CD14-positive monocyte (primary cell): ENCODE measurements at regions of chr13 and their contacts with region 1.

Region 1: DNA sequence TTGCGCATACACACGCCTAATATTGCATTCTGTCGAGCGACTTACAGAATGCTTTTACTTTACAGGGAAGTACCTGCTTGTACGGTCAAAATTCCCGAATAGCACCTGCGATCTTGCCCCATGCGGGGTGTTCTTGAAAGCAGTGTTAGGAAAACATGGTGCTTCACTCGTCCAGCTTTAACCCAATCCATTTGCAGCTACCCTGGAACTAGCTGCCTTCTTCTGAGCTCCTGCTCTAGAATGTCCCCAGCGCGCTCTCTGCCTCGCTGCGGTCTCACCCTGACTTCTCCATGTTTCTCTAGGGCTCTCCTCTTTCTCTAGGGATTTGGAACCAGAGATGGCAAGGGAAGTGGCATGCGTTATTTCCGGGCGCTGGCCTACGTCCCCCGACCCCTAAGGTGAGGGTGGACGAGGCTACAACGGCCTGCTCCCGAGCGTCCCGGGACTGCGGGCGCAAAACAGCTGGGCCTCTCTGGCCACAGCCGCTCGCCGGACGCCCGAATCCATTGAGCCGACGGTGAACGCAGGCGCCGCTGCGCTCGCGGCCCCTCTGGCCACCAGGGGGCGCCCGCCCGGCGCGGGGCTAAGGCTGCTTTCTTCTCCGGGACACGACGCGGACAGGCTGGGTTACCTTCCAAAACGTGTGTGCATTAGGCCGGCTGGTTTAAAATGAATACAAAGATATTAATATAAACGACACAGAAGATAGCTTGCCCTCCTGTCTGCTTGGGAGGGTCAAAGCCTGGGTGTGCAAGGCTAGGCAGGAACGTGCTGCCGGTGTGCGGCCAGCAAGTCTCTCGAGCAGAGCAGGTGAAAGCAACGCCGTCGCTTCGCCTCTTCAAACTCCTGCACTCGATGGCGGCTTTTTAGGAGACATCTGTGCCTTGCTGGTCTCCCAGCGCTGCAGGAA is 1.8 kb upstream of the SPRY2 start:
- DNase-seq: peak; percentile 57 to 67 (median 64)
- H3K4me3 ChIP-seq: peak overlapping the region; percentile 42 to 89 (median 52)
- H3K4me3 Mint-ChIP-seq: peak overlapping the region in 1 of 2 donors; percentile 83
- H3K27ac ChIP-seq: no peak overlapping the region
- H3K27ac Mint-ChIP-seq: peak overlapping the region in 3 of 7 donors; percentile 32 to 82 (median 61)
- H3K4me1 ChIP-seq: peaks cover 38 to 52% of the 10 kb centered on the region in 2 donors
- H3K4me1 Mint-ChIP-seq: peaks cover 26% of the 10 kb centered on the region
- H3K27me3 ChIP-seq: peaks cover 8 to 41% of the 10 kb centered on the region in 2 donors
- H3K27me3 Mint-ChIP-seq: peaks cover 16 to 28% (median 28%) of the 10 kb centered on the region in 3 donors
- CTCF ChIP-seq: peak; percentile 99

Region 2: GRCh38 chr13:79775830-79776229 is 566.9 kb before region 1 on chr13:
- intact Hi-C with region 1: loop called in 1 of 2 experiments (anchors 10 kb)
- DNase-seq: peak; percentile 34 to 42 (median 40)
- H3K4me3 ChIP-seq: no peak overlapping the region
- H3K4me3 Mint-ChIP-seq: no peak overlapping the region
- H3K27ac ChIP-seq: no peak overlapping the region
- H3K27ac Mint-ChIP-seq: no peak overlapping the region
- H3K4me1 ChIP-seq: peaks cover 14 to 16% of the 10 kb centered on the region in 2 donors
- H3K4me1 Mint-ChIP-seq: peaks cover 22% of the 10 kb centered on the region
- H3K27me3 ChIP-seq: no peaks in the 10 kb centered on the region
- H3K27me3 Mint-ChIP-seq: peaks cover 0 to 2% (median 0%) of the 10 kb centered on the region in 3 donors
- CTCF ChIP-seq: peak; percentile 73

Region 3: GRCh38 chr13:80695841-80696240 is 353.1 kb after region 1 on chr13:
- intact Hi-C with region 1: no loop called
- DNase-seq: no peak
- H3K4me3 ChIP-seq: no peak overlapping the region
- H3K4me3 Mint-ChIP-seq: no peak overlapping the region
- H3K27ac ChIP-seq: no peak overlapping the region
- H3K27ac Mint-ChIP-seq: no peak overlapping the region
- H3K4me1 ChIP-seq: no peaks in the 10 kb centered on the region
- H3K4me1 Mint-ChIP-seq: no peaks in the 10 kb centered on the region
- H3K27me3 ChIP-seq: no peaks in the 10 kb centered on the region
- H3K27me3 Mint-ChIP-seq: peaks cover 0 to 2% (median 1%) of the 10 kb centered on the region in 3 donors
- CTCF ChIP-seq: no peak